ENCODE measurements at regions of chr13 and their contacts with region 1.

Region 1: GRCh38 chr13:60152114-60152513 is 11.6 kb downstream of the DIAPH3 start:
- DNase-seq: no peak
- H3K4me3 Mint-ChIP-seq: no peak overlapping the region
- H3K27ac Mint-ChIP-seq: no peak overlapping the region
- H3K4me1 Mint-ChIP-seq: peaks cover 29% of the 10 kb centered on the region
- H3K27me3 Mint-ChIP-seq: no peaks in the 10 kb centered on the region
- CTCF ChIP-seq: no peak

Region 2: DNA sequence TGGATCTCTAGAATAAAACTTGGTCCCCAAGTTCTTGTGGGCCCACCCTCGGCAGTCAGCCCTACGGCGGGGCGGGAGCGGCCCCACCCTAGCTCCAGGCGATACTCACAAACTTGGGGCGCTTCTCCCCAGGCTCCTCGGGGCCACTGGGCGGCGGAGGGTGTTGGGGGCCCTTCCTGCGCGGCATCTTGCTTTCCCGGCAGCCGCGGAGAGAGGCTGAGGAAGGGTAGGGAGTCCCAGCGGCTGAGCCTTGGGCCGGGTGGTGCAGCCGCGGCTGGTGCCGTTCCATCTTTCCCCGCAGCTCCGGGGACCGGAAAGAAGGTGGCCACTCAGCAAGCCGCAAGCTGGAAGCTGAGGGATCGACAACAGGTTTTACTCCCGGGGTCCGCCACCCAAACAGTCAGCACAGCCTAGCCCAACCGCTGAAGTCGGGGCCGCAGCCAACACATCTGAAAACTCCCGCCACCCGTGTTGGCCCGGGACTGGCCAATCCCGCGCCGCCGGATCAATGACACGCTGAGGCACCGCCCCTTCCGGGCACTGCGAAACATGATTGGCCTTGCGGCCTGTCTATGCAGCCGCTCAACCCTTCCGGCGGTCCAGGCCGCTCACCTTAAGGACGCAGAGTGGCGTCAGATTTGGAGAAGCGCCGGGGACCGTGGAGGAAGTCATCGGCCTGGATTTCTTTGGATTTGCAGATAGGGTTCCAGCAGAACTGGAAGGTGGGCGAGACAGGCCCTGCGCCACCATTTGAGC is 11.5 kb after region 1 on chr13 and contains the start of gene DIAPH3:
- CTCF ChIA-PET with region 1: interaction called, 12 read pairs
- POLR2A ChIA-PET with region 1: interaction called, 32 read pairs
- intact Hi-C with region 1: no loop called
- DNase-seq: peak; percentile 96
- H3K4me3 Mint-ChIP-seq: peak within 1 kb of the TSS; percentile 94
- H3K27ac Mint-ChIP-seq: peak within 1 kb of the TSS; percentile 77
- H3K4me1 Mint-ChIP-seq: peaks cover 39% of the 10 kb centered on the region
- H3K27me3 Mint-ChIP-seq: no peaks in the 10 kb centered on the region
- CTCF ChIP-seq: no peak
- total RNA-seq, gene DIAPH3: 21.2 and 34.7 TPM in 2 replicates

Measured in MCF 10A (cell line).